Left cardiac atrium (tissue), 4 donors: ENCODE measurements at regions of chr15 and their contacts with region 1.

Region 1: GRCh38 chr15:35078221-35078915 is 6.7 kb downstream of the NANOGP8 start:
- DNase-seq: peak; percentile 31
- ATAC-seq: peak; percentile 50 to 51

Region 2: GRCh38 chr15:35437157-35437556 is 358.8 kb after region 1 on chr15:
- intact Hi-C with region 1: loop called (anchors 10 kb)
- DNase-seq: no peak
- ATAC-seq: no peak

Region 3: DNA sequence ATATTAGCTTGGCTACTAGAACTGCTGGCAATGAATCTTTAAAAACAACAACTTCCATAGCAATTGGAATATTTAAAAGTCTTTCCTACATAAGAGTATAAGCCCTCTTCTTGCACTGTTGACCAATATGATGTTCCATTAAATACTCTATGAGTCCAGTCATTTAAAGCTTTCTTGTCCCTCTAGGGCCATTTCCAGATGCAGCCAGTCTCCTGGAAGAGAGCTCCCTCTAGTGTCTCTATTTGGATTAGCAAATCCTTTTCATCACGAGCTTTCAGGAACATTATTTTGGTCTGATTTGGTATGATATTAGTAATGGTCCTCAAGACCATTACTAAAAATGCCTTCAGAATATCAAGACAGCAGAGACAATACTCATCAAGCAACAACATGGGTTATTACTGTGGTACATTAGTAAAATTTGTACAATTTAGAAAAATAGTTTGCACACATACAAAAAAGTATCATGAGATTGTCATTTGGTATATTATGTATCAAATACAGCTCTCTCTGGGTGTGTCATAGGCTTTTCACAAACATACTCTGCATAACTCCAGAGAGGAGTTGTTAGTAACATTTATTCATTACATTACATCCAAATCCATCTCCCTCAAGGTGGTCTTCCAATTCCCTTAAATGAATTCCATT is 366.3 kb after region 1 on chr15:
- intact Hi-C with region 1: loop called (anchors 10 kb)
- DNase-seq: no peak
- ATAC-seq: no peak